IMR-90 (cell line): ENCODE measurements at regions of chr1 and their contacts with region 1.

Region 1: GRCh38 chr1:18962121-18962721 is 5.7 kb upstream of the IFFO2 start:
- DNase-seq: no peak
- ATAC-seq: peak; percentile 9; the same call in 1 of the 2 replicates
- H3K4me3 ChIP-seq: no peak overlapping the region
- H3K27ac ChIP-seq: no peak overlapping the region
- H3K4me1 ChIP-seq: peaks cover 11% of the 10 kb centered on the region
- H3K27me3 ChIP-seq: peaks cover 6% of the 10 kb centered on the region; the same call in 1 of the 2 replicates
- CTCF ChIP-seq: no peak
- POLR2A ChIP-seq: no peak
- RAD21 ChIP-seq: no peak

Region 2: GRCh38 chr1:18932879-18933278 is 29.3 kb before region 1 on chr1:
- CTCF ChIA-PET with region 1: no interaction called
- POLR2A ChIA-PET with region 1: no interaction called
- dilution Hi-C with region 1: no loop called
- in situ Hi-C with region 1: no loop called
- intact Hi-C with region 1: no loop called
- DNase-seq: no peak
- ATAC-seq: peak; percentile 15; the same call in 1 of the 2 replicates
- H3K4me3 ChIP-seq: no peak overlapping the region
- H3K27ac ChIP-seq: no peak overlapping the region
- H3K4me1 ChIP-seq: peaks cover 29% of the 10 kb centered on the region
- H3K27me3 ChIP-seq: no peaks in the 10 kb centered on the region
- CTCF ChIP-seq: no peak
- POLR2A ChIP-seq: no peak
- RAD21 ChIP-seq: no peak

Region 3: GRCh38 chr1:18999359-18999758 is 37.1 kb after region 1 on chr1:
- CTCF ChIA-PET with region 1: no interaction called
- POLR2A ChIA-PET with region 1: no interaction called
- dilution Hi-C with region 1: no loop called
- in situ Hi-C with region 1: loop called (anchors 5 kb)
- intact Hi-C with region 1: no loop called
- DNase-seq: peak; percentile 46
- ATAC-seq: peak; percentile 73
- H3K4me3 ChIP-seq: no peak overlapping the region
- H3K27ac ChIP-seq: peak overlapping the region; percentile 48; the same call in 1 of the 2 replicates
- H3K4me1 ChIP-seq: no peaks in the 10 kb centered on the region
- H3K27me3 ChIP-seq: no peaks in the 10 kb centered on the region; the same call in 1 of the 2 replicates
- CTCF ChIP-seq: no peak
- POLR2A ChIP-seq: no peak
- RAD21 ChIP-seq: no peak

Region 4: GRCh38 chr1:19087737-19088594 is 125.7 kb after region 1 on chr1:
- CTCF ChIA-PET with region 1: no interaction called
- POLR2A ChIA-PET with region 1: no interaction called
- dilution Hi-C with region 1: no loop called
- in situ Hi-C with region 1: no loop called
- intact Hi-C with region 1: no loop called
- DNase-seq: peak; percentile 14
- ATAC-seq: no peak
- H3K4me3 ChIP-seq: no peak overlapping the region
- H3K27ac ChIP-seq: peak overlapping the region; percentile 35; the same call in 1 of the 2 replicates
- H3K4me1 ChIP-seq: peaks cover 33% of the 10 kb centered on the region
- H3K27me3 ChIP-seq: no peaks in the 10 kb centered on the region
- CTCF ChIP-seq: no peak
- POLR2A ChIP-seq: no peak
- RAD21 ChIP-seq: no peak

Region 5: GRCh38 chr1:19101244-19101643 is 139.0 kb after region 1 on chr1:
- CTCF ChIA-PET with region 1: no interaction called
- POLR2A ChIA-PET with region 1: no interaction called
- dilution Hi-C with region 1: no loop called
- in situ Hi-C with region 1: no loop called
- intact Hi-C with region 1: no loop called
- DNase-seq: peak; percentile 60
- ATAC-seq: no peak
- H3K4me3 ChIP-seq: no peak overlapping the region
- H3K27ac ChIP-seq: no peak overlapping the region
- H3K4me1 ChIP-seq: 0 out of 2 replicates have a peak, but pooled peaks cover 2% of the 10 kb centered on the region
- H3K27me3 ChIP-seq: no peaks in the 10 kb centered on the region
- CTCF ChIP-seq: no peak
- POLR2A ChIP-seq: no peak
- RAD21 ChIP-seq: no peak